ENCODE measurements at regions of chr12 and their contacts with region 1.

Region 1: GRCh38 chr12:47651368-47652254 is 54.2 kb downstream of the RPAP3 start:
- DNase-seq: peak; percentile 64
- H3K4me3 Mint-ChIP-seq: no peak overlapping the region
- H3K27ac Mint-ChIP-seq: no peak overlapping the region
- H3K4me1 Mint-ChIP-seq: peaks cover 20% of the 10 kb centered on the region
- H3K27me3 Mint-ChIP-seq: no peaks in the 10 kb centered on the region

Region 2: GRCh38 chr12:47636908-47637780 is 14.5 kb before region 1 on chr12:
- CTCF ChIA-PET with region 1: interaction called, 14 read pairs
- POLR2A ChIA-PET with region 1: no interaction called
- intact Hi-C with region 1: no loop called
- DNase-seq: peak; percentile 71
- H3K4me3 Mint-ChIP-seq: no peak overlapping the region
- H3K27ac Mint-ChIP-seq: peak overlapping the region; percentile 18
- H3K4me1 Mint-ChIP-seq: peaks cover 6% of the 10 kb centered on the region
- H3K27me3 Mint-ChIP-seq: no peaks in the 10 kb centered on the region

Region 3: DNA sequence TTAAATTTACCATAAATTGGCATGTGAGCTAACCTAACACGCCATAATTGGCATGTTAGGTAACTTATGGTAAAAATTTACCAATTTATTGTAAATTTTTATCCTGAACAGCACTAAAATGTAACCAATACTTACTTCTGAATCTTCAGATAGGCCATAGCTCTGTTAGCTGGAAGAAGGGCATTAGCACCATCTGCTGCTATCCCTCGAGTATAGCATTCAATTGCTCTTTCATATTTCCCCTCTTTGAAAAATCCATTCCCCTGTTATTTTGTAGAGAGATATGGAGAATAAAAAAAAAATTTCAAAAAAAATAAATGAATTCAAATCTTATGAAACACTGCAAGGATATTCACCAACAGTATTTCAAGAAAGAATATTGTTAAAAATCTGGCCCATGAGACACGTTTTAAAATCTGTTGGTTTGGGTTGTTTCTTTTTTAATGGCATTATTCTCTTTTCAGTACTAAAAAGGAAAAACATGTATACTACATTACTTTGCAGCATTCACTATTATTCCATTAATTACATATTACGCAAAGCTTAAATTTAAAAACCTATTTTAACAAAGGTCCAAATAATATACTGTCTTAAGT is 35.1 kb after region 1 on chr12:
- CTCF ChIA-PET with region 1: interaction called, 11 read pairs
- POLR2A ChIA-PET with region 1: no interaction called
- intact Hi-C with region 1: loop called (anchors 2 kb)
- DNase-seq: no peak
- H3K4me3 Mint-ChIP-seq: no peak overlapping the region
- H3K27ac Mint-ChIP-seq: no peak overlapping the region
- H3K4me1 Mint-ChIP-seq: peaks cover 6% of the 10 kb centered on the region
- H3K27me3 Mint-ChIP-seq: no peaks in the 10 kb centered on the region

Region 4: GRCh38 chr12:47705566-47706425 is 54.2 kb after region 1 on chr12 and contains the start of gene RPAP3:
- CTCF ChIA-PET with region 1: interaction called, 3 read pairs
- POLR2A ChIA-PET with region 1: no interaction called
- intact Hi-C with region 1: loop called (anchors 5 kb)
- DNase-seq: peak; percentile 99
- H3K4me3 Mint-ChIP-seq: peak within 1 kb of the TSS; percentile 96
- H3K27ac Mint-ChIP-seq: peak within 1 kb of the TSS; percentile 95
- H3K4me1 Mint-ChIP-seq: peaks cover 50% of the 10 kb centered on the region
- H3K27me3 Mint-ChIP-seq: no peaks in the 10 kb centered on the region
- total RNA-seq, gene RPAP3: 49.4 to 50.2 TPM

Region 5: DNA sequence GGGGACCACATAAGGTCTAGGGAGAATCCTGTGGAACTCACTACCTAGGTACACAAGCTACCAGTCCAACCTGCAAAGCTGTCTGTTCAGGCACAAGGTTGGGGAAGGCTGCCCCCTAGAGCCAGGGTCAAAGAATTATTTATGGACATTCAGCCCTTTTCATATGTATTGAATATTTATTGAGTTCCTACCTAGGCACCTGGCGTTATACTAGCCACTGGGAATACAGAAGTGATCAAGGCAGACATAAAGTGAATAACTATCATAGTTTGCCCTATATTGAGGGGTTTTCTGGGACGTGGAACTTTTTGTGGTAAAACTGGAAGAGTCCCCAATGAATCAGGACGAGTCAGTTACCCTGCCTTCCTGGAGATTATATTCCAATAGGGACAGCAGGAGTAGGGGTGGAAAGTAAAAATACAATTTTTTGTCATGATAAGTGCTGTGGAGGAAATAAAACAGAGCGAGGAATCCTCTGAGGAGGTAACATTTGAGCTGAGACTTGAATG is 115.7 kb after region 1 on chr12:
- CTCF ChIA-PET with region 1: interaction called, 13 read pairs
- POLR2A ChIA-PET with region 1: no interaction called
- intact Hi-C with region 1: no loop called
- DNase-seq: peak; percentile 86
- H3K4me3 Mint-ChIP-seq: no peak overlapping the region
- H3K27ac Mint-ChIP-seq: no peak overlapping the region
- H3K4me1 Mint-ChIP-seq: no peaks in the 10 kb centered on the region
- H3K27me3 Mint-ChIP-seq: no peaks in the 10 kb centered on the region

Region 6: DNA sequence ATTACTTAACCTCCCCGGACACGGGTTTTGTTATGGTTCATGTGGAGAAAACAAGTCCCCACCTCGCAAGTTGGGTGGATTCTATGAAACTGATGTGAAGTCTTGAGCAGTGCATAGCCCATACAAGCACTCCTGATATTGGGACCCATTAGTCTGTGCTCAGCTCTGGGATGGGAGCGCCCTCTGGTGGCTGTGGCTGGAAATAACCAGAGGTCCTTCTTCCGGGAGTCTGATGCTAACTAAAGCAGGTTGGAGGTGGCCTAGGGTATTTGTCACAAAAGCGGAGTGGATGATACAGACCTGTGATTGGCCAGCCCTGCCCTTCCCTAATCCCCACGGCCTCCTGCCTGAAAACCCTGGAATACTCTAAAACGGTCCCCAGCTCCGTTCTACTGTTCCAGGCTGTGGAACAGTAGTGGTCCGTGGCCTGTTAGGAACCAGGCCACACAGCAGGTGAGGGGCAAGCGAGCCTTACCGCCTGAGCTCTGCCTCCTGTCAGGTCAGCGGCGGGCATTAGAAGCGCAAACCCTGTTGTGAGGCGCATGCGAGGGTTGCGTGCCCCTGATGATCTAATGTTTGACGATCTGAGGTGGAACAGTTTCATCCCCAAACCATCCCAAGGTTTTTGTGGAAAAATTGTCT is 127.8 kb after region 1 on chr12:
- CTCF ChIA-PET with region 1: interaction called, 4 read pairs
- POLR2A ChIA-PET with region 1: no interaction called
- intact Hi-C with region 1: loop called (anchors 5 kb)
- DNase-seq: peak; percentile 95
- H3K4me3 Mint-ChIP-seq: no peak overlapping the region
- H3K27ac Mint-ChIP-seq: no peak overlapping the region
- H3K4me1 Mint-ChIP-seq: peaks cover 17% of the 10 kb centered on the region
- H3K27me3 Mint-ChIP-seq: no peaks in the 10 kb centered on the region

Measured in activated CD4-positive, alpha-beta memory T cell treated with anti-CD3 and anti-CD28 coated beads for 36 hours (primary cell).